Upper lobe of right lung (tissue), 1 donor: ENCODE measurements at regions of chr22 and their contacts with region 1.

Region 1: DNA sequence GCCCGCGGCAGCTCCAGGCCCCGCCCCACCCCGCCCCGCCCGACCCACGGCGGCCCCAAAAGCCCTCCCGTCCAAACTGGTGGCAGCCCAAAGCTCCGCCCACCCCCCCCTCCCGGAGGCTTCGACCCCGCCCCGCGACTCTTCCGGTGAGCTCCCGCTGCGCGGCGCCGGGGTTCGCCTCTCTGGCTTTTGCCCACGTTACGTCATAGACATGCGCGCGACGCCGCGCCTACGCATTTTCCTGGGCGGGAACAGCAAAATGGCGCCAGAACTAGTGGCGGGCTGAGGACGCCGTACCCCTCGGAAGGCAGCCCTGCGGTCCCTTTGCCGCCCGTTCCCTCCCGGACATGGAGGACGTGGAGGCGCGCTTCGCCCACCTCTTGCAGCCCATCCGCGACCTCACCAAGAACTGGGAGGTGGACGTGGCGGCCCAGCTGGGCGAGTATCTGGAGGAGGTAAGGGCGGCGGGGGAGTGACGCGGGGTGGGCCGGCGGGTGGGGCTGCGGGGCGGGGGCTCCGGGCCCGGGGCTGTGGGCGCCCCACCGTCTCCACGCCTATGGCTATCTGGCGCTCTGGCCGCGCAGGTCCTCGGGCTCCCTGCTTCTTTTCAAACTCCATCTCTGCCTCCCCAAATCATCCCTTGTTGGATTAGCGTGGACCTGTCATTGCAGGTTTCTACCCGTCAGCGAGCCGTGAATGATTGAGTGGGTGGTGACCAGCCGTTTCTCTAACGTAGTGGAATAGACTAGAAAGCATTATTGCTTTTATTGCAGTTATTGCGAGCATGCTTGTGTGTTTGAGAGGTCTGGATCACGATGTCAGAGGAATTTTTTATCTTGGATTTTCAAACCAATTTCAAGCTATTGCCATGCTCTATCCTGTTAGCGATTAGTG is at the start of gene NCAPH2:
- DNase-seq: peak; percentile 98
- ATAC-seq: peak; percentile 83
- H3K4me3 ChIP-seq: peak within 1 kb of the TSS; percentile 91
- H3K27ac ChIP-seq: peak within 1 kb of the TSS; percentile 92
- H3K4me1 ChIP-seq: peaks cover 21% of the 10 kb centered on the region
- H3K27me3 ChIP-seq: no peaks in the 10 kb centered on the region
- CTCF ChIP-seq: no peak
- total RNA-seq, gene NCAPH2: 51.8 TPM

Region 2: DNA sequence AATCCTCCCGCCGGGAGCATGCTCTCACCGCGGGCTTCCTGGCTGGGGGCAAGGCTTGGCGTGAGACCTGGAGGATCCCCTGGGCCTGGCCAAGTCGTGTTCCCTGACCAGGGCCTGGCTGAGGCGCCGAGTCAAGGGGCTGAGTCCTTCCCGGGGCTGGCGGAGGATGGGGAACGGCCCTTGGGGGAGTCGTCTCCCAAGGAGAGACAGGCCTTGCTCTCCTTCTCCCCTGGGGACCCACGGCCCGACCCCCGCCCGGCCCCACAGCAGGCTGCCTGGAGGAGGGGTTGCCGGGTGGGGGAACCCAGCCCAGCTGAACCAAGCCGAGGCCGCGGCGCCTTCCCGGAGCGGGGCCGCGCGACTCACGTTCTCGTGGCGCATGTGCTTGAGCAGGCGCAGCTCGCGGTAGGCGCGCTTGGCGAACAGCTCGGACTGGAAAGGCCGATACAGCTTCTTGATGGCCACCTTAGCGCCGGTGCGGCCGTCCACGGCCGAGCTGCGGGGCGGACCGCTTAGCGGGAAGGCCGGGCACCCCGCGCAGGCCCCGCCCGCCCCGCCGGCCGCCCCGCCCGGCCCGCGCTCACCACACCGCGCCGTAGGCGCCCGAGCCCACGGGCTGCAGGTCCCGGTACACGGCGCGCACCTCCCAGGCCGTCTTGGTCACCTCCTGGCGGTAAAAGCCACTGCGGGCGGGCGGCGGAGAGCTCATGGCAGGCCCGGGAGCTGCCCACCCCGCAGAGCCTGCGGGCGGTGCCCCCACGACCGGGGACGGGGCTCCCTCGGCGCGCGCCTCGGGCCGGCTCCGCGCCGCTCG is 247.2 kb before region 1 on chr22:
- intact Hi-C with region 1: loop called (anchors 10 kb)
- DNase-seq: no peak
- ATAC-seq: peak; percentile 8
- H3K4me3 ChIP-seq: peak overlapping the region; percentile 50
- H3K27ac ChIP-seq: peak overlapping the region; percentile 17
- H3K4me1 ChIP-seq: peaks cover 12% of the 10 kb centered on the region
- H3K27me3 ChIP-seq: peaks cover 15% of the 10 kb centered on the region
- CTCF ChIP-seq: no peak

Region 3: GRCh38 chr22:50406416-50407170 is 101.6 kb before region 1 on chr22:
- intact Hi-C with region 1: no loop called
- DNase-seq: no peak
- ATAC-seq: peak; percentile 62
- H3K4me3 ChIP-seq: no peak overlapping the region
- H3K27ac ChIP-seq: no peak overlapping the region
- H3K4me1 ChIP-seq: peaks cover 12% of the 10 kb centered on the region
- H3K27me3 ChIP-seq: no peaks in the 10 kb centered on the region
- CTCF ChIP-seq: no peak